ENCODE measurements at regions of chr2 and their contacts with region 1.

Region 1: GRCh38 chr2:88880441-88880953 is 189.0 kb downstream of the RPIA start:
- DNase-seq: peak; percentile 43 to 65
- ATAC-seq: peak; percentile 82 to 92; a peak in 5 of 6 replicates
- H3K4me3 ChIP-seq: no peak overlapping the region
- H3K27ac ChIP-seq: no peak overlapping the region
- H3K4me1 ChIP-seq: 0 out of 3 replicates have a peak, but pooled peaks cover 2% of the 10 kb centered on the region
- CTCF ChIP-seq: peak; percentile 84
- EP300 ChIP-seq: no peak
- POLR2A ChIP-seq: no peak
- RAD21 ChIP-seq: peak; percentile 66 to 73

Region 2: GRCh38 chr2:88807266-88807962 is 73.1 kb before region 1 on chr2:
- CTCF ChIA-PET with region 1: no interaction called
- POLR2A ChIA-PET with region 1: no interaction called
- DNase-seq: no peak
- ATAC-seq: no peak
- H3K4me3 ChIP-seq: no peak overlapping the region
- H3K27ac ChIP-seq: no peak overlapping the region
- H3K4me1 ChIP-seq: no peaks in the 10 kb centered on the region
- CTCF ChIP-seq: no peak
- EP300 ChIP-seq: no peak
- POLR2A ChIP-seq: no peak
- RAD21 ChIP-seq: no peak

Region 3: DNA sequence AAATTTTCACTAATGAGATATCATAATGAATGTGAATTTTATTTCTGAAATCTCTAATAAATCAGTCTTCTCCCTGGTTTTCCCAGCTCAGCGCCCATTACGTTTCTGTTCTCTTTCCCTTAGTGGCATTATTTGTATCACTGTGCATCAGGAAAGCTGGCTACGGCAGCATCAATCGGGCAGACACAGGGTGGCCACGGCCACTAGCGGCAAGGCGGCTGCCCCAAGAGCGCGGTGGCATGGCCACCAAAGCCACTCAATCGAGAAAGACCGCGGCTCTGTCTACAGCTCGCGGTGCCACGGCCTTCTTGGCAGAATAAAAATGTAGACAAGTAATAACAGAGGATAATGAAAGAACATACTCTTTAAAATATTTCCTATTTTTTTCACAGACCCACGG is 21.0 kb before region 1 on chr2:
- CTCF ChIA-PET with region 1: interaction called, 29 read pairs
- POLR2A ChIA-PET with region 1: no interaction called
- DNase-seq: no peak
- ATAC-seq: no peak
- H3K4me3 ChIP-seq: no peak overlapping the region
- H3K27ac ChIP-seq: no peak overlapping the region
- H3K4me1 ChIP-seq: no peaks in the 10 kb centered on the region
- CTCF ChIP-seq: no peak
- EP300 ChIP-seq: no peak
- POLR2A ChIP-seq: no peak
- RAD21 ChIP-seq: no peak

Region 4: DNA sequence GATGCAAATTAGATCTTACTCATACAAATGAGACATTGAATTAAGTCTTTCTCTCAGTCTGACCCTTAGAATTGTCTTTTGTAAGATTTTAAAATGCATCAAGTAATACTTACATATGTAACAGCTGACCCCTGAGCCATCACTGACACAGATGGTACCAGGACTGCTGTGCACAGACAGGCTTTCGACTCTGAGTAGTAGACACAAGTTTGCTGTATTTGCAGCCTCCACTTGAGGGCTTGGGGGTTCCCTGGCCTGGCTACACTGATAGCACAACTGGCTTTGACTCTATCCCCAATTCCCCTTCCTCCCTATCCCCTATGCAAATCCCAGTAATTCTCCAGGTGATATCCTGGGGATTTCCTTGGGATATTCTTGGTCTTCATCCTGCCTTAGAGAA is 11.7 kb after region 1 on chr2:
- CTCF ChIA-PET with region 1: interaction called, 12 read pairs
- POLR2A ChIA-PET with region 1: no interaction called
- DNase-seq: no peak
- ATAC-seq: no peak
- H3K4me3 ChIP-seq: no peak overlapping the region
- H3K27ac ChIP-seq: no peak overlapping the region
- H3K4me1 ChIP-seq: no peaks in the 10 kb centered on the region
- CTCF ChIP-seq: no peak
- EP300 ChIP-seq: no peak
- POLR2A ChIP-seq: no peak
- RAD21 ChIP-seq: no peak

Region 5: DNA sequence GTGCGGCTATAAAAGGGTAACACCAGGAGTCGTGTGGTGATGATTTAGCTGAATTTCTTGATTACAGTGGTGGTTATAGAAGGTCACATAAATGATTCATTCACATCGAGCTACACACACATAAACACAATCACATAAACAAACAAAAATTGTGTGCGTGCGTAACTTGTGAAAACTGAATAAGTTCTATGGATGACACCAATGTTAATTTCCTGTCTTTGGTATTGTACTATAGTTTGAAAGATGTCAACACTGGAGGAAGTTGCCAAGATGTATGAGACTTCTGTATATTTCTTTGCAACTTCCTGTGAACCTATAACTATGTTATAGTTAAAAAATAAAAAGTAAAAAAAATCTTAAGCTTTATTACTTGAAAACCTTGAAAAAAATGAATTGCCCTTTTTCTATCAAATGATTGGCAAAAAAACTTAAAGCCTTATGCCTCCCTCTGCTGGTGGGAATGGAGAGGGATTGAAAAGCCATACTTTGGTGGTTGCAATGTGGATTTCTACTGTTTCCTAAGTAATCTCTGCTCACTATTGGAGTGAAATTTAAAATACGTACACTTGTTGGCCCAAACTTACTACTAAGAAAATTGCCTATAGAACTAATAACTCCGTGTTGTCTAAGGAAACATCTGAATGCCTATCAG is 38.7 kb after region 1 on chr2:
- CTCF ChIA-PET with region 1: interaction called, 10 read pairs
- POLR2A ChIA-PET with region 1: no interaction called
- DNase-seq: peak; percentile 10 to 58
- ATAC-seq: peak; percentile 76 to 83; a peak in 4 of 6 replicates
- H3K4me3 ChIP-seq: no peak overlapping the region
- H3K27ac ChIP-seq: no peak overlapping the region
- H3K4me1 ChIP-seq: no peaks in the 10 kb centered on the region
- CTCF ChIP-seq: peak; percentile 74
- EP300 ChIP-seq: no peak
- POLR2A ChIP-seq: no peak
- RAD21 ChIP-seq: peak; percentile 38 to 43; a peak in 4 of 5 replicates

Measured in A549 (cell line).